Vagina (tissue), 2 donors: ENCODE measurements at regions of chr4 and their contacts with region 1.

Region 1: DNA sequence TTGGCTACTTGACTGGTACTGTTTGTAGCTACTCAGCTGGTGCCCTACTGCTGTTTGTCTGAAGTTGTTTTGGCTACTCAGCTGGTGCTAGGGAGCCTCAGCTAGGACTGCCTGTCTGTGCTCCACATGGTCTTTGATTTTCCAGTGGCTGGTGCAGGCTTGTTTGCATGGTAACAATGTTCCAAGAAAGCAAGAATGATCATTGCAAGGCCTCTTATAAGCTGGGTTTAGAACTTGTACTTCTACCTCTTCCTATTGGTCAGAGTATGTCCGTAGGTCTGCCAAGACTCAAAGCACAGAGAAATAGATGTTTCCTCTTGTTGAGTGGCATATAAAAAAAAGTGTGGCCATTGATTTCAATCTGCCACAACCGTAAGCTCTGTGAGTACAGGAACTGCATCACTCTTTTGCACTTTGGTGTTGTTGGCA is 17.6 kb downstream of the NFKB1 start:
- DNase-seq: no peak
- H3K4me3 ChIP-seq: no peak overlapping the region
- H3K27ac ChIP-seq: no peak overlapping the region
- H3K4me1 ChIP-seq: peaks cover 44% of the 10 kb centered on the region
- H3K27me3 ChIP-seq: no peaks in the 10 kb centered on the region
- CTCF ChIP-seq: no peak
- POLR2A ChIP-seq: no peak

Region 2: DNA sequence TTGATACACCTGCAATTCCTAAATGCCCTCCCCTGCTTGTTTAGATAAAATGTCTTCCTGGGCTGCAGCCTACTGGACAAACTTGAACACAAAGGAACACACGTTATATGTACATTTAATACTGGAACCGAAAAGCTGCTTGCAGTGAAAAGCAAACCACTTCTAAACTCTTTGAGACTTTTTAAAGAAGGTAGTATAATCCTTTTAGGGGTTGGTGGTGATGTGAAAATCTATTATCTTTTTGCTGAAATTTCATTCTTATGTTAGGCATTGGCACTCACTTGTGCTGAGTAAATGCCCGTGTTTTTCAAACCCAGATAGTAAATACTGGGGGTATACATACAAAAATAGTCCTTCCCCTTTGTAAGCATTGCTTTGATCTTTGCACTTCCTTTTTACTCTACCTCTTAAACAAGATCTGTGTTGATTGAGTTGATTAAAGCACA is 15.4 kb before region 1 on chr4:
- intact Hi-C with region 1: loop called (anchors 1 kb)
- DNase-seq: no peak
- H3K4me3 ChIP-seq: peak overlapping the region; percentile 93 to 95
- H3K27ac ChIP-seq: peak overlapping the region; percentile 99
- H3K4me1 ChIP-seq: peaks cover 64% of the 10 kb centered on the region
- H3K27me3 ChIP-seq: no peaks in the 10 kb centered on the region
- CTCF ChIP-seq: no peak
- POLR2A ChIP-seq: no peak